GM18951 (cell line): ENCODE measurements at regions of chr12 and their contacts with region 1.

Region 1: GRCh38 chr12:41264281-41264680 is 76.2 kb downstream of the PDZRN4 start:
- POLR2A ChIP-seq: no peak

Region 2: DNA sequence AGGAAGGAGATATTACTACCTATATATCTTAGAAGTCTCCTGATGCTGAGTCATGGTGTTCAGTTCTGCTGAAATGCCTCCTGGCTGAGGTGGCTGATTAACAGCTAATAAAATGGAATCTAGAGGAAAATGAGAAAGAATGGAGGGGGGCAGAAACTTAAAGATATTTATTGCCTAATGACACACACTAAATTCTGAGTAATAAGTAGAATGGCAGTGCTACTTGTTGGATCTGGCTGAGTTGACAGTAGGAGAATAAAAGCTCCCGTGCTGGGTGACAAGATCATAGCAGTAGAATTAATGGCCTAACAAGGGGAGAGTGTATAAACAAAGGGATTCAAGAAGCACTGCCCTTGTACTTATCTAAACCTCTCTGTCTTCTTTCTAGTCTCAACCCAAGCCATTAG is 434.5 kb before region 1 on chr12:
- in situ Hi-C with region 1: no loop called
- POLR2A ChIP-seq: no peak

Region 3: GRCh38 chr12:42568952-42569915 is 1305.0 kb after region 1 on chr12:
- in situ Hi-C with region 1: loop called (anchors 25 kb)
- POLR2A ChIP-seq: no peak